ENCODE measurements at regions of chr10 and their contacts with region 1.

Region 1: GRCh38 chr10:101441541-101442455 is 87.8 kb downstream of the BTRC start:
- DNase-seq: peak; percentile 38 to 78 (median 56)
- ATAC-seq: peak; percentile 98
- H3K4me3 ChIP-seq: no peak overlapping the region
- H3K27ac ChIP-seq: no peak overlapping the region
- H3K4me1 ChIP-seq: peaks cover 0 to under 1% of the 10 kb centered on the region in 2 experiments; a peak in 3 of 5 replicates
- H3K27me3 ChIP-seq: no peaks in the 10 kb centered on the region
- CTCF ChIP-seq: peak; percentile 70 to 82 (median 72)
- EP300 ChIP-seq: peak; percentile 40
- POLR2A ChIP-seq: no peak
- RAD21 ChIP-seq: peak; percentile 80 to 88

Region 2: GRCh38 chr10:101031128-101031795 is 410.5 kb before region 1 on chr10 and contains the starts of genes PDZD7 and SFXN3:
- CTCF ChIA-PET with region 1: no interaction called
- POLR2A ChIA-PET with region 1: no interaction called
- in situ Hi-C with region 1: no loop called
- intact Hi-C with region 1: loop called (anchors 10 kb)
- DNase-seq: peak; percentile 88 to 97 (median 96)
- ATAC-seq: peak; percentile 98
- H3K4me3 ChIP-seq: peak within 1 kb of the TSS; percentile 21
- H3K27ac ChIP-seq: no peak within 1 kb of the TSS
- H3K4me1 ChIP-seq: peaks cover 12 to 45% of the 10 kb centered on the region in 2 experiments
- H3K27me3 ChIP-seq: peaks cover 2 to 4% of the 10 kb centered on the region in 2 experiments; a peak in 4 of 5 replicates
- CTCF ChIP-seq: no peak
- EP300 ChIP-seq: no peak
- POLR2A ChIP-seq: no peak
- RAD21 ChIP-seq: no peak
- polyA plus RNA-seq, gene PDZD7: not detected
- polyA plus RNA-seq, gene SFXN3: 0.24 to 0.31 TPM

Region 3: GRCh38 chr10:101301249-101301711 is 140.5 kb before region 1 on chr10:
- CTCF ChIA-PET with region 1: interaction called, 26 read pairs
- POLR2A ChIA-PET with region 1: no interaction called
- in situ Hi-C with region 1: loop called (anchors 5 kb)
- intact Hi-C with region 1: loop called (anchors 1 kb)
- DNase-seq: peak; percentile 50 to 68 (median 56)
- ATAC-seq: peak; percentile 94
- H3K4me3 ChIP-seq: no peak overlapping the region
- H3K27ac ChIP-seq: no peak overlapping the region
- H3K4me1 ChIP-seq: no peaks in the 10 kb centered on the region
- H3K27me3 ChIP-seq: peaks cover 6 to 37% of the 10 kb centered on the region in 2 experiments; a peak in 4 of 5 replicates
- CTCF ChIP-seq: peak; percentile 76 to 80 (median 76)
- EP300 ChIP-seq: no peak
- POLR2A ChIP-seq: no peak
- RAD21 ChIP-seq: peak; percentile 80 to 89

Region 4: DNA sequence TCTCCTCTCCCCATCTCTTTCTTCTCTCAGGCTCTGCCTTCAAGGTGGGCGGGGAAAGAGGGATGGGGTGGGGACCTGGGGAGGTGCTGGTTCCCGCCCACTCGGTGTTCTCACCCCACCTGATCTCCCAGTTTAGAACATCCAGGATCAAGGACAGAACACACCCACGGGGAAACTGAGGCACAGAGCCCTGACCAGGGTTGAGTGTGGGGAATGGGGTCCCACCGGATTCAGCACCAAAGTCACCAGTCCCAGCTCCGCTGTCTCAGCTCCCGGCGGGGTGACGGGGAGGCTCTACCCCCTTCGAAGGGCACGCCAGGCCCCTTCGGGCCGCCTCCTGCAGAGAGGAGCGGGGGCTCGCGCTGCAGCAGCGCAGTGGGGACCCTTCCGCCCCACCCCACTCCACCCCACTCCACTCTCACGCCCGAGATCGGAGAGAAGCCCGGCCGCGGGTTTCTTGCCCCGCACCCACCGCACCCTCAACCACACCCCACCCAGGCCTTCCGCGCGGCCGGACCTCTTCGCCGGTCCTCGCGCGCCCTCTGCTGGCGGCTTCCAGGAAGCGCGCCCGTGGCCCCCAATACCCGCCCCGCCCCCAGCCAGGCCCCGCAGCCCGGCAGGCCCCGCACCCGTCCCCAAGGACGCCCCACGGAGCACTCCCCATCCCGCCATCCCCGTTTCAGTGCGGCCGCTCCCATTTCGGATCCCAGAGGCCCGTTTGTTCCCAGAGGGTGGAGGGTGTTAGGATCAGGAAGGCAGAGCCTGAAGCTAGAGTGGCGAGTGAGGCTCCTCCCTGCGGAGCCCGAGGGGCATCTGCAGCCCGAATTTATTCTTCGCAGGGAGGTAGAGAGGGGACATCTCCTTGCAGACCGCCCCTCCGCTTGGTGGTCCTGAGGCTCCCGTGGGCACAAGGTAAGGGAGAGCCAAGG is 128.3 kb after region 1 on chr10:
- CTCF ChIA-PET with region 1: no interaction called
- POLR2A ChIA-PET with region 1: no interaction called
- in situ Hi-C with region 1: no loop called
- intact Hi-C with region 1: loop called (anchors 10 kb)
- DNase-seq: peak; percentile 77 to 88 (median 86)
- ATAC-seq: peak; percentile 88
- H3K4me3 ChIP-seq: peak overlapping the region; percentile 54
- H3K27ac ChIP-seq: no peak overlapping the region; the same call in 2 of the 3 replicates
- H3K4me1 ChIP-seq: peaks cover 20 to 48% of the 10 kb centered on the region in 2 experiments
- H3K27me3 ChIP-seq: no peaks in the 10 kb centered on the region
- CTCF ChIP-seq: peak; percentile 34 to 78 (median 60); a peak in 5 of 6 replicates
- EP300 ChIP-seq: no peak
- POLR2A ChIP-seq: no peak
- RAD21 ChIP-seq: peak; percentile 64 to 69